ENCODE measurements at regions of chrX and their contacts with region 1.

Region 1: GRCh38 chrX:102712952-102713625 is 841 bp downstream of the GPRASP2 start:
- DNase-seq: peak in 3 of 9 experiments; percentile 10 to 39 (median 11)
- ATAC-seq: peak; percentile 36
- H3K4me3 ChIP-seq: peak overlapping the region; percentile 49 to 54
- H3K4me3 Mint-ChIP-seq: peak overlapping the region; percentile 85
- H3K27ac ChIP-seq: no peak overlapping the region
- H3K27ac Mint-ChIP-seq: no peak overlapping the region
- H3K4me1 ChIP-seq: peaks cover 4% of the 10 kb centered on the region
- H3K4me1 Mint-ChIP-seq: peaks cover 24% of the 10 kb centered on the region
- H3K27me3 ChIP-seq: no peaks in the 10 kb centered on the region
- H3K27me3 Mint-ChIP-seq: peaks cover 2% of the 10 kb centered on the region
- CTCF ChIP-seq: no peak

Region 2: GRCh38 chrX:102085706-102086105 is 627.4 kb before region 1 on chrX:
- CTCF ChIA-PET with region 1: no interaction called
- POLR2A ChIA-PET with region 1: no interaction called
- intact Hi-C with region 1: no loop called
- DNase-seq: peak in 2 of 9 experiments; percentile 1 to 7
- ATAC-seq: no peak
- H3K4me3 ChIP-seq: no peak overlapping the region
- H3K4me3 Mint-ChIP-seq: no peak overlapping the region
- H3K27ac ChIP-seq: no peak overlapping the region
- H3K27ac Mint-ChIP-seq: no peak overlapping the region
- H3K4me1 ChIP-seq: no peaks in the 10 kb centered on the region
- H3K4me1 Mint-ChIP-seq: no peaks in the 10 kb centered on the region
- H3K27me3 ChIP-seq: no peaks in the 10 kb centered on the region
- H3K27me3 Mint-ChIP-seq: peaks cover 12% of the 10 kb centered on the region
- CTCF ChIP-seq: no peak

Region 3: DNA sequence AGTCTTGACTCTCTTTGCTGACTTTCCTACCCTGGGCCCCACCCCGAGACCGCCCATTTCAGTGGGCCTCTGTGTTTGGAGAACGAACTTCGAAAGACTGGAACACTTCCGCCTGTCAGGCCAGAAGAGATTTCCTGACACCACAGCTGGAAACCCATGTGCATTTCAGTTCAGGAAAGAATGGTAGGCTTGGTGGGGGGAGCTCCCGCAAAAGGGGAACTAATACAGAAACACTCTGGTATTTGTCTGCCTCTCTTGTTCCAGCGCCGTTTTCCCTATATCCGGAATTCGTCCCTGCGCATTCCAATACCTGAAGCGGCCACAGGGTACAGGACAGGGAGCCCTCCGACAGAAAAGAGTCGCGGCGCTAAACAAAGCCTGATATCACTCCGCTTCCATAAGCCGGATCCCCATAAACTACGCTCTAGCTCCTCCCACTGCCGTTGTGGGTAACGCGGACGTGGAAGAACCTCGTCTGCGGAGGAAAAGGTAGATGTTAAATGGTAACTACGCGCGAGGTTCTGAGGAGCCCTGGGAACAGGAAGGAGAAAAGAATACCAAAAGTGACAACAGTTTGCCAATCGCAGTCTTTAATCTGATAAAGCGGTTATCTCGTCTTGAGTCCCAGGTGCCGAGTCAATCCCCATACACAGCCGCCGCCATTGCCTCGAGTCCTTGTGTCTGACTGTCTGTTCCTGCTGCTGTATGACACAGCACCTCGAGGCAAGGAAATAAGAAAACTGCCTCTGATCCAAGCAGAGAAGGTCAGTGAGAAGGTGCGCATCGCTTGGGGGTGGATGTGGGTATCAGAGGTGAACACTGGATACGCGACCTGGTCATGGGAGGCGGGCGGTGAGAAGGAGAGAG is 113.8 kb before region 1 on chrX and contains the start of gene ARMCX5:
- CTCF ChIA-PET with region 1: no interaction called
- POLR2A ChIA-PET with region 1: no interaction called
- intact Hi-C with region 1: loop called in 1 of 2 experiments (anchors 10 kb)
- DNase-seq: peak; percentile 39 to 88 (median 66)
- ATAC-seq: peak; percentile 89
- H3K4me3 ChIP-seq: peak within 1 kb of the TSS; percentile 72 to 85
- H3K4me3 Mint-ChIP-seq: peak within 1 kb of the TSS; percentile 99
- H3K27ac ChIP-seq: peak within 1 kb of the TSS; percentile 80 to 84
- H3K27ac Mint-ChIP-seq: peak within 1 kb of the TSS; percentile 99
- H3K4me1 ChIP-seq: peaks cover 5% of the 10 kb centered on the region
- H3K4me1 Mint-ChIP-seq: peaks cover 43% of the 10 kb centered on the region
- H3K27me3 ChIP-seq: no peaks in the 10 kb centered on the region
- H3K27me3 Mint-ChIP-seq: no peaks in the 10 kb centered on the region
- CTCF ChIP-seq: no peak
- total RNA-seq, gene ARMCX5: 13.3 to 14.7 TPM

Region 4: DNA sequence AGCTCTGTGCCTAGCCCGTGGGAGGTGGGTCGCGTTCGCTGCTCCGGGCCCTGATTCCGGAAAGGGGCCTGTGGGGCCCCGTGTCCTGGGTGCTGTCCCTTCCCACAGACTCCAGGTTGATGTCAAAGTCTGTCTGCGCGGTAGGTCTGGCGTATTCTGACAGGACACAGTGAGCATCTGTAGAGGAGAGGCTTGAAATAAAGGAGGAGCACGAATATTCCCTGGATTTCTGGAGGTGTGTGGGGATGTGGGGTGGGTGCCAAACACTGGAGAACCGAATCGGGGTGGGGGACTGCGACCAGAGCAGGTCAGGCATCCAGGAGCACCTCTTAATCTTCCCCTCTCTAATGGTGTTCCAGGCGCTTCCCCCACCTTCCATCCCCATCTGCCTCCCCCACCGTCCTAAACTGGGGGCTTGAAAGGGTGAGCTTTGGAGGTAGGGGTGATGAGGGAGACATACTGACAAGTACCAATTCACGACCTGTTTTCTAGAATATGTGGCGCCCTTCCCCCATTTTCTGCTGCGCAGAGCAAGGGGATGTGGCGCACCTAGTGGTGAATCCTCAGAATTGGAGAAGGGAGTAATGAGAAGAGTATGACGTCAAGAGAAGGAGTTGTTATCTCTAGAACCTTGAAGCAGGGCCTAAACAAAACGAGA is 60.9 kb before region 1 on chrX:
- CTCF ChIA-PET with region 1: no interaction called
- POLR2A ChIA-PET with region 1: no interaction called
- intact Hi-C with region 1: loop called (anchors 5 kb)
- DNase-seq: peak; percentile 26 to 83 (median 62)
- ATAC-seq: peak; percentile 78
- H3K4me3 ChIP-seq: peak overlapping the region; percentile 73 to 78
- H3K4me3 Mint-ChIP-seq: peak overlapping the region; percentile 99
- H3K27ac ChIP-seq: peak overlapping the region; percentile 70 to 78
- H3K27ac Mint-ChIP-seq: peak overlapping the region; percentile 95
- H3K4me1 ChIP-seq: peaks cover 13% of the 10 kb centered on the region
- H3K4me1 Mint-ChIP-seq: peaks cover 42% of the 10 kb centered on the region
- H3K27me3 ChIP-seq: no peaks in the 10 kb centered on the region
- H3K27me3 Mint-ChIP-seq: no peaks in the 10 kb centered on the region
- CTCF ChIP-seq: peak; percentile 49

Region 5: GRCh38 chrX:102659790-102660757 is 53.0 kb before region 1 on chrX:
- CTCF ChIA-PET with region 1: interaction called, 5 read pairs
- POLR2A ChIA-PET with region 1: no interaction called
- intact Hi-C with region 1: loop called (anchors 5 kb)
- DNase-seq: peak; percentile 57 to 87 (median 83)
- ATAC-seq: peak; percentile 96
- H3K4me3 ChIP-seq: peak overlapping the region; percentile 40 to 56
- H3K4me3 Mint-ChIP-seq: peak overlapping the region; percentile 85
- H3K27ac ChIP-seq: peak overlapping the region; percentile 40 to 66
- H3K27ac Mint-ChIP-seq: peak overlapping the region; percentile 95
- H3K4me1 ChIP-seq: no peaks in the 10 kb centered on the region
- H3K4me1 Mint-ChIP-seq: peaks cover 51% of the 10 kb centered on the region
- H3K27me3 ChIP-seq: no peaks in the 10 kb centered on the region
- H3K27me3 Mint-ChIP-seq: no peaks in the 10 kb centered on the region
- CTCF ChIP-seq: no peak

Region 6: GRCh38 chrX:102745857-102746584 is 32.9 kb after region 1 on chrX:
- CTCF ChIA-PET with region 1: no interaction called
- POLR2A ChIA-PET with region 1: no interaction called
- intact Hi-C with region 1: loop called in 1 of 2 experiments (anchors 1 kb)
- DNase-seq: peak in 6 of 9 experiments; percentile 16 to 57 (median 26)
- ATAC-seq: peak; percentile 82
- H3K4me3 ChIP-seq: peak overlapping the region; percentile 50 to 53
- H3K4me3 Mint-ChIP-seq: peak overlapping the region; percentile 92
- H3K27ac ChIP-seq: no peak overlapping the region
- H3K27ac Mint-ChIP-seq: peak overlapping the region; percentile 52
- H3K4me1 ChIP-seq: no peaks in the 10 kb centered on the region
- H3K4me1 Mint-ChIP-seq: peaks cover 8% of the 10 kb centered on the region
- H3K27me3 ChIP-seq: no peaks in the 10 kb centered on the region
- H3K27me3 Mint-ChIP-seq: no peaks in the 10 kb centered on the region
- CTCF ChIP-seq: no peak

Measured in CD8-positive, alpha-beta T cell (primary cell).